GM12878 (cell line): ENCODE measurements at regions of chr10 and their contacts with region 1.

Region 1: DNA sequence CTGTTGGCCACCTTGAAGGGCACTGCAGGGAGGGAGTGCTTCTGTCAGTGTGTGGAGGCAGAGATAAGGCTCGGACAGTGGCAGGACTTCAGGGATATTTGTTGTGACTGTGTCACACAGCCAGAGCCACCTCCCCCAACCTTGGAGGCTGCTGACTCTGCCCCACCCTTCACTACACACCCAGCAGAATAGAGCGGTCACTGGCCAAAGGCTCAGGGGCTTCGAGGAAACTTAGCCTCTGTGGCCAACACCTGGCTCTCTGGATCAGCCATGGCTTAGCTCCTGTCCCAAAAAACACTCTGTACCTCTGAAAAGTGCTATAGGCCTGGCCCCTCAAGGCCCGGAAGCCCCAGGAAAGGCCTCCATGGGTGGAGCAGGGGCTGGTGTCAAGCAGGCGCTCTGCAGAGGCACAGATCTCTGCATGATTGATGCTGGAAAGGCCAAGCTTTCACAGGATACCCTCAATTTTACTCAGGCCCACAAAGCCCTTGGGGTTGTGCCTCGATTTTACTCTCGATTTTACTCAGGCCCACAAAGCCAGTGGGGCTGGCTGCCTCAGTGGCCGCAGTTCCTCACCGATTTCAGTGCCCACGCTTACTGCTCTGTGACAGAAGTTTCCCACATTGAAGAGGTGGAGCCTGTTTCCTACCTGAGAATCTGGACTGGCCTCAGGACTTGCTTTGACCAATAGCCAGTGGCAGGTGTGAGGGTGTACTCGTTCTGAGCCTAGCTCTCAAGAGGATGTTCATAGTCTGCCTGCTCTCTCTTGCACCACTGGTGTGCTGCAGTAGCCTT is 113.2 kb upstream of the GPR26 start:
- DNase-seq: peak; percentile 81
- ATAC-seq: peak; percentile 84
- H3K4me3 ChIP-seq: 0 out of 2 replicates have a peak overlapping the region, but pooled peaks have one; percentile 2
- H3K27ac ChIP-seq: peak overlapping the region; percentile 85
- H3K4me1 ChIP-seq: peaks cover 74% of the 10 kb centered on the region
- H3K27me3 ChIP-seq: no peaks in the 10 kb centered on the region
- CTCF ChIP-seq: no peak
- EP300 ChIP-seq: peak; percentile 42 to 51; a peak in 2 of 4 replicates
- POLR2A ChIP-seq: 0 out of 2 replicates have a peak, but pooled peaks have one; percentile 38
- RAD21 ChIP-seq: no peak

Region 2: GRCh38 chr10:123154092-123154921 is 398.6 kb before region 1 on chr10 and contains the start of gene BUB3:
- CTCF ChIA-PET with region 1: interaction called, 3 read pairs
- POLR2A ChIA-PET with region 1: no interaction called
- RAD21 ChIA-PET with region 1: interaction called, 5 read pairs
- SMC1A ChIA-PET with region 1: interaction called, 4 read pairs
- in situ Hi-C with region 1: no loop called
- intact Hi-C with region 1: loop called (anchors 5 kb)
- DNase-seq: peak; percentile 99
- ATAC-seq: peak; percentile 96
- H3K4me3 ChIP-seq: peak within 1 kb of the TSS; percentile 93
- H3K27ac ChIP-seq: peak within 1 kb of the TSS; percentile 98
- H3K4me1 ChIP-seq: peaks cover 21% of the 10 kb centered on the region
- H3K27me3 ChIP-seq: no peaks in the 10 kb centered on the region
- CTCF ChIP-seq: no peak
- EP300 ChIP-seq: no peak
- POLR2A ChIP-seq: peak; percentile 98
- RAD21 ChIP-seq: no peak
- polyA plus RNA-seq, gene BUB3: 648 to 1,126 TPM

Region 3: DNA sequence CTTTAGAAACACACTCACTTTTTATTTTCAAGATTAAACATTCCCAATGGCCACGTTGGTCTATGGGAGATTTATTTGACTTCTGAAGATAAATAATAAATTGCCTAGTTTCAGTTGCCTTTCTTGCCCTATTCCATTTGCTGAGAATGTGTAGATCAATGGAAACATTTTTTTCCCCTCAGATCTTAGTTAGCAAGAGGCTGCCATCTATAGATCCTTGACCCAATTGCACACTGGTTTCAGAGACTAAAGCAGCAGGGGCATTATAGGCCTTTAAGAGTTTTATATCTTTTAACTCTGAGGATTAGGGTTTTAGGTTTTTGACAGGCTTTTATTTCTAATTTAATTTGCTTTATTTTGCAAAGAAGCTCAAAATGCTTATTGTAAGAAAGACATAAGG is 50.0 kb before region 1 on chr10:
- CTCF ChIA-PET with region 1: no interaction called
- POLR2A ChIA-PET with region 1: no interaction called
- RAD21 ChIA-PET with region 1: no interaction called
- SMC1A ChIA-PET with region 1: interaction called, 5 read pairs
- in situ Hi-C with region 1: no loop called
- intact Hi-C with region 1: loop called (anchors 2 kb)
- DNase-seq: no peak
- ATAC-seq: peak; percentile 58; the same call in 2 of the 3 replicates
- H3K4me3 ChIP-seq: no peak overlapping the region
- H3K27ac ChIP-seq: no peak overlapping the region
- H3K4me1 ChIP-seq: peaks cover 36% of the 10 kb centered on the region
- H3K27me3 ChIP-seq: no peaks in the 10 kb centered on the region
- CTCF ChIP-seq: peak; percentile 37 to 52 (median 47); a peak in 5 of 6 replicates
- EP300 ChIP-seq: no peak
- POLR2A ChIP-seq: no peak
- RAD21 ChIP-seq: peak; percentile 86

Region 4: DNA sequence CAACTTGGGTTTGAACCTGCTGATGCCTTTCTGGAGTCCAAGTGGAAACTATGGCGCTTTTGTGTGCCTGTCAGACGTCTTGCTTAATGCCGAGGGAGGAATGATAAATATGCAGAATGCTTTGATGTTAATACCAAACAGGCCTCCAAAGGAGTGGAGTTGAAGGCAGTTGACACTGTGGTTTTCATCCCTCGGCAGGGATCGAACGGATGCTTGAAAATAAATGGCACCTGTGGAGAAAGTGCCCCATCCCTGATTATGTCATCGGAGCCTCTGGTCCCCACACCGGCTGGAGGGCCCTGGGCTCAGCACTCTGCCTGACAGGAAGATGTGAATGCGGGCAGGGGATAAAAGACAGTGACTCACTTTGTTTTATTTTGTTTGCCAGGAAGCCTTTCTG is 35.5 kb before region 1 on chr10:
- CTCF ChIA-PET with region 1: no interaction called
- POLR2A ChIA-PET with region 1: no interaction called
- RAD21 ChIA-PET with region 1: no interaction called
- SMC1A ChIA-PET with region 1: no interaction called
- in situ Hi-C with region 1: no loop called
- intact Hi-C with region 1: no loop called
- DNase-seq: no peak
- ATAC-seq: no peak
- H3K4me3 ChIP-seq: no peak overlapping the region
- H3K27ac ChIP-seq: no peak overlapping the region
- H3K4me1 ChIP-seq: no peaks in the 10 kb centered on the region
- H3K27me3 ChIP-seq: no peaks in the 10 kb centered on the region
- CTCF ChIP-seq: no peak
- EP300 ChIP-seq: no peak
- POLR2A ChIP-seq: no peak
- RAD21 ChIP-seq: no peak

Region 5: DNA sequence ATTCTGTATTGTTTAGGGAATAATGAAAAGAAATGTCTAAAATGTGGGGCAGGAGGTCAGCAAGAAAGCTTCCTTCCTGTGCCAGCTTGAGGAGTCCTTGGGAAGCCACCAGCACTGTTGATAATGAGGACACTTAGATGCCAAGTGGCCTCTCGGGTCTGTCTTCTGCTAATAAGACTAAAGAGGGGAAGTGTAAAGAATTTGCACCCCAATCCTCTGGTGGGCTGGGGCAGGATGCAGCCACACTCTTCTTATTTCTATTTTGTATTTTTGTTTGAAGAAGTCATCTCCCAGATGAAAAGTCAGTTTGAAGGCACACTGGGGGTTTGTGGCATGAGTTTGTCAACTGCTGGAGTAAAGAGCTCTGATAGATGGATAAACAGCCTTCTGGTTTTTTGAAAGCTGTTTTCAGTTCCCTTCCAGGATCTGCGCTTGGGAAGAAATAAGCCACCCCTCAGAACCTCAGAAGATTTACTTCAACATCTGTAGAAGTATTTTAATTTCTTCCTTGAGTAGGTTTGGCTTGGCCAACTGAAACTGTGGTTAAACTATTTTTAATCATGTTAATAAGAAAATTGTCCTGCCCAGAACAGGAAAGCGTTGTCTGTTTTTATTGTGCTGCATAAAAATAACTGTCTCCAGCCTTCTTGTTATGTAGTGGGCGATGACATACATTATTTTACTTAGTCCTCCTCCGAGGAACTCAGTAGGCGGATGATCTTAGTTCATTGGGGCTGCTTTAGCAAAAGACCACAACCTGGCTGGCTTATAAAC is 15.6 kb before region 1 on chr10:
- CTCF ChIA-PET with region 1: interaction called, 4 read pairs
- POLR2A ChIA-PET with region 1: no interaction called
- RAD21 ChIA-PET with region 1: no interaction called
- SMC1A ChIA-PET with region 1: interaction called, 3 read pairs
- in situ Hi-C with region 1: no loop called
- intact Hi-C with region 1: loop called (anchors 2 kb)
- DNase-seq: no peak
- ATAC-seq: peak; percentile 61
- H3K4me3 ChIP-seq: no peak overlapping the region
- H3K27ac ChIP-seq: peak overlapping the region; percentile 41; the same call in 1 of the 2 replicates
- H3K4me1 ChIP-seq: peaks cover 24% of the 10 kb centered on the region
- H3K27me3 ChIP-seq: no peaks in the 10 kb centered on the region
- CTCF ChIP-seq: no peak
- EP300 ChIP-seq: no peak
- POLR2A ChIP-seq: no peak
- RAD21 ChIP-seq: no peak

Region 6: DNA sequence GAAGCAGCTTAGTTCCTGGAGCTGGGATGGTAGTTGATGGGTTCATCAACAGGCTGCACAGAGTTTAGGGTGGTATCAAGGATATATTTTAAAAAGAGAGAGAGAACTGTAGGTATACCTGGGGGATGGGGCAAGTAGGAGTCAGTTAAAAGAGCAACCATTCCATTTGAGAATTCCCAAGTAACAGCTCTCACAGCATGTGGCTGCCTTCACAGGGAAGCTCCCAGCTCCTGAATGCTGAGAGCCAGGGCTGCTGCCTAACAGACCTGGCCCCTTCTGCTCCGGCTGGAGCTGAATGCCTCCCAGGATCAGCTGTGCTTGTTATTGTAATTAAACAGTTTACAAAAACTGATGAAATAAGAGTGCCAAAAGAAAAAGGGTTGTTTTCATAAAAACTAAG is 54.4 kb after region 1 on chr10:
- CTCF ChIA-PET with region 1: no interaction called
- POLR2A ChIA-PET with region 1: no interaction called
- RAD21 ChIA-PET with region 1: no interaction called
- SMC1A ChIA-PET with region 1: no interaction called
- in situ Hi-C with region 1: no loop called
- intact Hi-C with region 1: no loop called
- DNase-seq: no peak
- ATAC-seq: no peak
- H3K4me3 ChIP-seq: no peak overlapping the region
- H3K27ac ChIP-seq: no peak overlapping the region
- H3K4me1 ChIP-seq: no peaks in the 10 kb centered on the region
- H3K27me3 ChIP-seq: peaks cover 3 to 6% of the 10 kb centered on the region in 2 experiments; a peak in 2 of 4 replicates
- CTCF ChIP-seq: no peak
- EP300 ChIP-seq: no peak
- POLR2A ChIP-seq: no peak
- RAD21 ChIP-seq: no peak